ENCODE measurements at regions of chr20 and their contacts with region 1.

Region 1: GRCh38 chr20:13546497-13547131 is 92.1 kb downstream of the TASP1 start:
- DNase-seq: peak; percentile 82
- H3K4me3 Mint-ChIP-seq: no peak overlapping the region
- H3K27ac Mint-ChIP-seq: no peak overlapping the region
- H3K4me1 Mint-ChIP-seq: no peaks in the 10 kb centered on the region
- H3K27me3 Mint-ChIP-seq: no peaks in the 10 kb centered on the region

Region 2: DNA sequence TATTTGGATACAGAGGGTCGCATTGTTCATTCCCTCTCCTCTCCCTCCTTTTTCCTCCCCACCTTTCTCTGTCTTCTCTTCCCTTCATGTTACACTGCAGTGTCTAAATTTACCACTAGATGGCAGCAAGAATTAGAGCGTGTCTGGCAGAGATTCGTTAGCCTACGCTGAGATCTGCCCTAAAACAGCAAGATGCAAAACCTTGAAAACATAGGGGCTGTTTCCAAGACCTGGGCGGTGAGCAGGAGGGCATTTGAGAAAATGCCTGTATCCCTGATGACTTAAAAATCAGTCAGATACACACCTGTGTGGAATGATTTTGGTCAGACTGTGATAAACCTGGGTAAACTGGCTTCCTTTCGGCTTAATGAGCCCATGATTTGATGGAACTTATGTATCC is 427.0 kb before region 1 on chr20:
- CTCF ChIA-PET with region 1: interaction called, 32 read pairs
- DNase-seq: peak; percentile 38
- H3K4me3 Mint-ChIP-seq: no peak overlapping the region
- H3K27ac Mint-ChIP-seq: no peak overlapping the region
- H3K4me1 Mint-ChIP-seq: no peaks in the 10 kb centered on the region
- H3K27me3 Mint-ChIP-seq: no peaks in the 10 kb centered on the region

Region 3: DNA sequence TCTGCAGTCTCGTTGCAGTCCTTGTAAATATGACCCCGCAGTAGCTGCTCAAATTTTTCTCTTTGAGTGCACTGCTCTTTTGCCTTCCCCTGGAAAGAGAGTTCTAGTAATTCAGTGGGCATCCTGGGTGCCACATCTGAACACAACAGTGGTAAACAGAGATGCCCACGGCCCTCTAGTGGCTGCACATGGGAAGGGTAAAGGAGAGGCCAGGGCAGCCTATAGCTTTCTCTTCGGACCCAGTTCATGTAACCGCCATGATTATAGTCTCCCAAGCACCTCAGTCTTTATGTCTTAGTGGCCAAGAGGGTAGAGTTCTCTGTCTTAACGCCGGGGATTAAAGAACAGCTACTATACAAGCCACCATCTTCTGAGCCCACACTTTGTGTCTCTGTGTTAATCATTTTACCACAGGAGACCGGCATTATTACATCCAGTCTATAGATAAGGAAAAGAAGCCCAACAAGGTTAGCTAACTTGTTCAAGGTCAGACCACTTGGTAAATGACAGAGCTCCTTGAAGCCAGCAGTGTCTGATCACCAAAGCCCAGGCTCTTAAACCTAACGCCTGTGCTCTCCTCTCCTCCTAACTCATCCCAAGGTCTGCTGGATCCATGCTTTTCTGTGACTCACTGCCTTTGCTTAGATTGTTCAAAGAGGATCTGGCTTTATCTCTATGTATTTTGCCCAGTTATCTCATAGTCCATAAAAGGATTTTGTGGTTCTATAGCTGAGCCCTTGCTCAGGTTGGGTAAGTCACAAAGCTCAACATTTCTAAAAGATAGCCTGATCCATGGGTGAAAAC is 243.8 kb before region 1 on chr20:
- CTCF ChIA-PET with region 1: interaction called, 15 read pairs
- DNase-seq: peak; percentile 68
- H3K4me3 Mint-ChIP-seq: no peak overlapping the region
- H3K27ac Mint-ChIP-seq: no peak overlapping the region
- H3K4me1 Mint-ChIP-seq: no peaks in the 10 kb centered on the region
- H3K27me3 Mint-ChIP-seq: no peaks in the 10 kb centered on the region

Region 4: GRCh38 chr20:13533946-13534345 is 12.7 kb before region 1 on chr20:
- CTCF ChIA-PET with region 1: interaction called, 15 read pairs
- DNase-seq: no peak
- H3K4me3 Mint-ChIP-seq: no peak overlapping the region
- H3K27ac Mint-ChIP-seq: no peak overlapping the region
- H3K4me1 Mint-ChIP-seq: no peaks in the 10 kb centered on the region
- H3K27me3 Mint-ChIP-seq: no peaks in the 10 kb centered on the region

Region 5: GRCh38 chr20:13771853-13772453 is 225.3 kb after region 1 on chr20:
- CTCF ChIA-PET with region 1: interaction called, 12 read pairs
- DNase-seq: no peak
- H3K4me3 Mint-ChIP-seq: no peak overlapping the region
- H3K27ac Mint-ChIP-seq: no peak overlapping the region
- H3K4me1 Mint-ChIP-seq: no peaks in the 10 kb centered on the region
- H3K27me3 Mint-ChIP-seq: no peaks in the 10 kb centered on the region

Measured in activated naive CD4-positive, alpha-beta T cell treated with anti-CD3 and anti-CD28 coated beads, Interleukin-2, amount 10 ng/mL, durations not matched to agents 7 days and 5 days (primary cell).